ENCODE measurements at regions of chr9 and their contacts with region 1.

Region 1: DNA sequence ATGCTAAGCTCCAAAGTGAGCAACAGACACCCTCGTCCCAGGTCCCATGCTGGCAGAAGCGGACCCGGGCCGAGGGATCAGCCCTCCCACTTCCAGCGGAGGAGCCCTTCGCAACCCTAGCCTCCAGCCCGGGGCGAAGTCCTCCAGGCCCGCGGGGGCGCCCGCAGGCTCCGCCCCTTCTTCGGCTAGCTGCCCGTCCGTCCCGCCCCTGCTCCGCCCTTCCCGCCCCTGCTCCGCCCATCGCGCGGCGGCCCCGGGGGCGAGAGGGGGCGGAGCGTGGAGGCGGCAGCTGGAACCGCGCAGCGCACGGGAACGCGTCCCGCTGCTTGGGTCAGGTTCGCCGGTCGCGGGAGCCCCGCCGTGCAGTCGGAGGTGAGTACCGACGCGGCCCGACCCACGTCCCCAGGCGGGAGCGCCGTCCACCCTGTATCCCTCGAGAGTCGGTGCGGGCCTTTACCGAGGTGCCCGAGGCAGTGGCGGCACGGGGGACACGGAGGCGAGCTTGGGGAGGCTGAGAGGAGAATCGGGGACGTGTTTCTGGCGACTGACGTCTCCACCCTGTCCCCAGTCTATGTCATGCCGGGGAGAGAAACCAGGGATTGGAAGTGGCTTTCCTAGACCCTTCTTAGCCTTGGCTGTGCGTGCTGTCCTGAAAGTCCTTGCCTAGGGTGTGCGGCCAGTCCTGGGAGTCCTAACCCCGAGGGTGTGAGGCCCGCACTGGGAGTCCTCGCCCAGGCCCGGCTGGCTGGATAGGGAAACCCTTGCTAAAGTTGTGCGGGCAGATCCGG is at the start of gene ACO1:
- DNase-seq: peak; percentile 95
- H3K4me3 ChIP-seq: peak within 1 kb of the TSS; percentile 26 to 73 (median 64)
- H3K27ac ChIP-seq: peak within 1 kb of the TSS; percentile 84 to 90 (median 87)
- H3K4me1 ChIP-seq: peaks cover 0 to 21% (median 12%) of the 10 kb centered on the region in 4 donors
- H3K27me3 ChIP-seq: peaks cover 9% of the 10 kb centered on the region
- CTCF ChIP-seq: no peak
- EP300 ChIP-seq: no peak
- POLR2A ChIP-seq: peak; percentile 81
- total RNA-seq, gene ACO1: 10.1 to 34.5 (median 27.3) TPM

Region 2: GRCh38 chr9:32431940-32432555 is 47.5 kb after region 1 on chr9:
- in situ Hi-C with region 1: loop called in 1 of 4 experiments (anchors 5 kb)
- intact Hi-C with region 1: loop called (anchors 5 kb)
- DNase-seq: peak; percentile 38
- H3K4me3 ChIP-seq: no peak overlapping the region
- H3K27ac ChIP-seq: no peak overlapping the region
- H3K4me1 ChIP-seq: peaks cover 0 to 6% (median 0%) of the 10 kb centered on the region in 4 donors
- H3K27me3 ChIP-seq: no peaks in the 10 kb centered on the region
- CTCF ChIP-seq: peak; percentile 37 to 51 (median 46)
- EP300 ChIP-seq: no peak
- POLR2A ChIP-seq: no peak

Region 3: DNA sequence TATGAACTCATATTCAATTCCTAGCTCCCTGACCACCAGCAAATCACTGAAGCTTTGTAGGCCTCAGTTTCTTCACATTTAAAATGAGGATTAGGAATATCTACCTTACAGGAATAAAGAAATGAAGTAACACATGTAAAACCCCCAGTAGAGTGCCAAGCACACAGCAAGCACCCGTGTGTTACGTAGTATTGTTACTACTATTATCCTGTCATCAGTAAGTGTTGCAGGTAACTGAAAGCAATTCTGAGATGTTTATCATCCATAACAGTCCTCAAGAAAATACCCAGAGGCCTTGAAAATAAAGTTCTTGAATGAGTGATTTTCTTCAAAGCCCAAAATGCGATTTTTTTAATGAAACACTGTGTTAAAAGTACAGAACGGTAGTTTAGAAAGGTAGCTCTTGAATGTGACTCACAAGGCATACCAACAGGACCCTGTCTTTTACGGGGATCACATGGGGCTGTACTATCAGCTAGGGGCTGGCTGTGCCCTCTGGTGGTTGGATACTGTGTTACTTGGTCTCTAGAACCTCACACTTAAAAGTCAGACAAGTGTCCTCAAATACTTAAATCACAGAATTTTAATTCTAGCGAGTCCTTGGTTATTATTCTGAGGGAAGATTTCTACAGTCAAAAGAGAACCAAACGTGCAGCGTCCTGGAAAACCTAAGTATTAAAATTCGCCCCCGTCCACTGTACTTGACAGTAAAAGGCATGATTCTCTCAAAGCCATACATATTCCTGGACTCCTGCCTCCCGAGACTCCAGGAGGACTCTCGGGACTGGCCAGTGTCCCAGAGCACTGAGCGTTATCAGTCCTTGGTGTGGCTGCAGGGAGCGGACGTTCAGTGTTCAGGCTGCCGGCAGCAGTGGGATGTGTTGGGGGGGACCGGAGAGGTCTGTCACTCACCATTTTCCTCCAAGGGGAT is 187.7 kb after region 1 on chr9:
- in situ Hi-C with region 1: loop called in 3 of 4 experiments (anchors 5 to 10 kb)
- intact Hi-C with region 1: loop called (anchors 2 kb)
- DNase-seq: peak; percentile 75
- H3K4me3 ChIP-seq: peak overlapping the region; percentile 61 to 93 (median 80)
- H3K27ac ChIP-seq: peak overlapping the region; percentile 93 to 96 (median 95)
- H3K4me1 ChIP-seq: peaks cover 6 to 18% (median 17%) of the 10 kb centered on the region in 4 donors
- H3K27me3 ChIP-seq: no peaks in the 10 kb centered on the region
- CTCF ChIP-seq: peak; percentile 61 to 85 (median 68)
- EP300 ChIP-seq: no peak
- POLR2A ChIP-seq: no peak

Measured in transverse colon (tissue), 4 donors.